Motor neuron (in vitro differentiated cells): ENCODE measurements at regions of chr12 and their contacts with region 1.

Region 1: DNA sequence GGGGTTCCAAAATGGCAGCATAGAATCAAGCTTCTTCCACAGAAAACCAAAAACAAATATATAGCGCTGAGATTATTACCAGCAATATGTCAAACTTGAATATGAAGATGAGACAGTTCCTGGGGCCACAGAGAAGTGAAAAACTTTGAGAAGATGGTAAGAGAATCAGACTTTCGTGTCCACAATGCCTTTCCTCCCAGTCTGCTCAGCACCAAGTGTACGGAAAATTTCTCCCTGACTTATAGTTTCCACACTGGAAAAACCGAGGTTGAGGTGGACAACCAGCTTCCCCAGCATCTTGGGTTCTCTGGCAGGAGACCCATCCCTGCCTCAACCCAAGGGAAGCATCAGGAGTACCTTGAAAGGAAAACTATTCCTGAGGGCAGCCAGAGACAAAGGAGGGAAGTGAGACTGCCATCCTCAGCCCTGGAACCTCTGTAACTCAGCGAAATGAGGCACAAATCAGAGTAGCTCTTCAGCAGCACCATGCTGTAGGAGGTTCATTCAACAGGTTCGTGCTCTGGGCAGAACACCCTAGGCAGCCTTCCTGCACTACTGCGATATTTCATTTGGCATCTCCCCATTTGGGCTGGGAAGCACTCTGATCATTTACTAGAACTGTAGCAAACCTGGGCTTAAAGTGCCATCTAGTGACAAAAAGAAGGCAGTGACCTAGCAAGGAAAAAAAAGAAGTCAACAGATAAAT is 52.4 kb upstream of the CAPRIN2 start:
- ATAC-seq: peak; percentile 90 to 99 (median 93)
- H3K4me3 ChIP-seq: no peak overlapping the region
- H3K27ac ChIP-seq: no peak overlapping the region
- H3K4me1 ChIP-seq: peaks cover 0 to 2% of the 10 kb centered on the region in 2 donors

Region 2: DNA sequence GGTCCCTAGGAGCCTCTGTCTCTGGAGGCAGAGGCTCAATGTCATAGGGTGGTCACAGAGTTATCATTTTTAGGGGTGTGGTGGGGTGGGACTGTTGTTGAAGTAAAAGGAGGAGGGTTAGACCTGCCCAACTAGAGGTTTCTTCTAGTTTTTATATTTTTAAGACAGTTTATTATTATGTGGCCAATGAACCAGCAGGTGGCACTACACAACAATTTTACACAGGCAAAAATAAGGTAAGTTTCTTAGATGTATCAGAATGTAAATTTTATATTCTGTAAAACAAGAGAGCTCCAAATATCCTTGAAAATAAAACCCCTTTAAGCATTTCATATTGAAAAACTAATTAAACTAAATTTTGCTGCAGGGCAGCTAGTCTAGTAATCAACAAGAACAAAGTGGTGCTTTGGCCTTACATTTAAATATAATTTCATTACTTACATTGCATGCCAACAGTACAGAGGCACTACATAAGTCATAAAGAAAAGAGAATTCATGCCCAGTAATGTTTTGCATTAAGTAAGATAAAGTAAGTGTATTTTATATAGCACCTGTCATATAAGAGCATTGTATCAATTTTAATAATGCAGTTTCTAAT is 1287.5 kb before region 1 on chr12:
- in situ Hi-C with region 1: loop called in 3 of 9 experiments (anchors 25 kb)
- ATAC-seq: peak in 6 of 8 experiments; percentile 28 to 50 (median 42)
- H3K4me3 ChIP-seq: no peak overlapping the region
- H3K27ac ChIP-seq: no peak overlapping the region
- H3K4me1 ChIP-seq: peaks cover 0 to 11% of the 10 kb centered on the region in 2 donors

Region 3: DNA sequence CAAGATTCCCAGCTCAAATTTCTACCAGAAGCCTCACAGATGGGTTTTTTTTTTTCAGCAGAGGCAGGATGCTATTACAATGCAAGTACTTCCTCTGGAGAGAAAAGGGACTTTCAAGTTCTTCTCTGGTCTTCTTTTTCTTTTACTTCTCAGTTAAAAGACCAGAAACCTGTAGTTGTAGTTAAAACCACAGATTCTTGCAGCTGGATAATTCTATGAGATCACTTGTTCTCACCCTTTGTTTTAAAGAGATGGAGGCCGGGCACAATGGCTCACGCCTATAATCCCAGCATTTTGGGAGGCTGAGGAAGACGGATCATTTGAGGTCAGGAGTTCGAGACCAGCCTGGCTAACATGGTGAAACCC is 1262.1 kb before region 1 on chr12:
- in situ Hi-C with region 1: loop called in 3 of 9 experiments (anchors 25 kb)
- ATAC-seq: no peak
- H3K4me3 ChIP-seq: no peak overlapping the region
- H3K27ac ChIP-seq: no peak overlapping the region
- H3K4me1 ChIP-seq: no peaks in the 10 kb centered on the region